HEK293 (cell line): ENCODE measurements at regions of chr5 and their contacts with region 1.

Region 1: GRCh38 chr5:170273945-170274710 is 23.4 kb downstream of the LCP2 start:
- H3K4me3 ChIP-seq: no peak overlapping the region
- H3K27ac ChIP-seq: no peak overlapping the region
- H3K4me1 ChIP-seq: no peaks in the 10 kb centered on the region
- CTCF ChIP-seq: no peak; the same call in 1 of the 2 replicates

Region 2: GRCh38 chr5:170120576-170120975 is 153.6 kb before region 1 on chr5:
- CTCF ChIA-PET with region 1: no interaction called
- POLR2A ChIA-PET with region 1: no interaction called
- H3K4me3 ChIP-seq: no peak overlapping the region
- H3K27ac ChIP-seq: no peak overlapping the region
- H3K4me1 ChIP-seq: no peaks in the 10 kb centered on the region
- CTCF ChIP-seq: no peak

Region 3: DNA sequence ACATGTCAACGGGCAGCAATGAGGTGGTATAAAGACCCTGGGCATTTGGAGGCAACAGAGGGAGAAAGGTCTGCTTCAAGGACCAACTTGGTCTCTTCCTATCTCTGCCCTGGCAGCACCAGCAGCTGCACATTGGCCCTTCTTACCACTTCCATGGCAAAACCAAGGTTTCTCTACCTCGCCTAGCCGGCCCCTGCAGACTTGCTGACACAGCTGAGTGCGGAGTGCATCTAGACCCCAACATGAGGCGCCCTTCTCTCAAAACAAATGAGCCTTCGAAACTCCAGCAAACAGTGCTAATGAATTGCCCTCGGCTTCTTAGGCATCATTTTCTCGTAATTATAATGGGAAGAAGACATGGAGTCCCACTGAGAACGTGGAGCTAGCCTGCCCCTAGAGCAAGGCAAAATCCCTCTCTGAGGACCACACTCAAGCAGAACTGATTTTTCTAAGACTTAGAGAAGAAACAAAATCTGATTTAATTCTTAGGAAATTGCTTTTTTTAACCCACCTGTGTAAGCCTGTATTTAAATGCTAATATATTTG is 73.0 kb after region 1 on chr5:
- CTCF ChIA-PET with region 1: interaction called, 10 read pairs
- POLR2A ChIA-PET with region 1: no interaction called
- H3K4me3 ChIP-seq: no peak overlapping the region
- H3K27ac ChIP-seq: no peak overlapping the region
- H3K4me1 ChIP-seq: no peaks in the 10 kb centered on the region
- CTCF ChIP-seq: no peak

Region 4: GRCh38 chr5:170420780-170421412 is 146.8 kb after region 1 on chr5:
- CTCF ChIA-PET with region 1: interaction called, 65 read pairs
- POLR2A ChIA-PET with region 1: no interaction called
- H3K4me3 ChIP-seq: no peak overlapping the region
- H3K27ac ChIP-seq: no peak overlapping the region
- H3K4me1 ChIP-seq: no peaks in the 10 kb centered on the region
- CTCF ChIP-seq: peak; percentile 44; the same call in 1 of the 2 replicates